PC-9 (cell line): ENCODE measurements at regions of chr3 and their contacts with region 1.

Region 1: GRCh38 chr3:189756220-189757078 is 125.3 kb downstream of the TP63 start:
- DNase-seq: peak; percentile 58 to 100
- H3K4me3 ChIP-seq: no peak overlapping the region; the same call in 1 of the 2 replicates
- H3K27ac ChIP-seq: peak overlapping the region; percentile 93
- H3K4me1 ChIP-seq: peaks cover 40% of the 10 kb centered on the region
- H3K27me3 ChIP-seq: no peaks in the 10 kb centered on the region
- CTCF ChIP-seq: no peak

Region 2: DNA sequence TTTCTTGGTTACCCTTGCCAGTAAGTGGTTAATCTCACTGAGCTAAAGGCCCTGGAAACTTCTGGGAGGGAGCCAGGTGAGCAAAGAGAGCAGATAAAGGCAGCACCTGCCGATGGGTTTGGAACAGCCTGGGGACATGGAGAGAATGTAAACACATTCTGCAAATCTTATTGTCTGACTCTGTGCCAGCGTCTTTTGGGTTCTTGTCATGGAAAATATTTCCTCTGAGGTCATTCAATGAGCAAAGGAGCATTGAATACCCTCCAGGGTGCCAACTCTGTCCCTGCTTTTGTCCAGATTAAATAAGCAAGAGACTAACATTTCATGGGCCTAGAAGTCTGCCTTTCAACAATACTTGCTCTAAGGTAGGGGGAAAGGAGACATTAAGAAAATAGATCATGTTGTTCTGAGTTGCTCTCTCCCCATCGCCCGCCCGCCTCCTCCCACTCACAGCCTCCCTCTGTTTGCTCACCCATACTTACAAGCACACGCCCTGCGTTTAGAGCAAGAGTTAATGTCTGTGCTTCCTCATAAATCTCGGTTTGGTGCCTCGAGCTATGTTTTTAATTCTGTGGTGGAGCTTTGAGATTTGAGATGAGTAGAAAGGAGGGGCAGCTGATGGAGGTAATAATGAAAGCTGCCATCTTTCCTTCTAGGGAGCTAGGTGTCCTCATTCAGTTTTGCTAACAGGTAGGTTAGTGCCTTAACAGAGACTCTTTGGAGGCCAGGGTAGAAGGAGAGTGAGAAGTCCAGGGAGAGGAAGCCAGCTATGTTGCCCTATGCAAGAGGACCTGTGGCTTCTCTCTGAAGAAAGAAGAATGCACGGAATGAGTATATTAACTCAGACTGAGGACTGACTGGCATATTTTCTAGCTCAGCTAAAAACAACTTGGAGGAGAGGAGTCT is 451.8 kb before region 1 on chr3:
- CTCF ChIA-PET with region 1: no interaction called
- POLR2A ChIA-PET with region 1: no interaction called
- intact Hi-C with region 1: loop called (anchors 1 kb)
- DNase-seq: peak; percentile 93 to 99
- H3K4me3 ChIP-seq: peak overlapping the region; percentile 27; the same call in 1 of the 2 replicates
- H3K27ac ChIP-seq: peak overlapping the region; percentile 85
- H3K4me1 ChIP-seq: peaks cover 44% of the 10 kb centered on the region
- H3K27me3 ChIP-seq: no peaks in the 10 kb centered on the region
- CTCF ChIP-seq: no peak

Region 3: DNA sequence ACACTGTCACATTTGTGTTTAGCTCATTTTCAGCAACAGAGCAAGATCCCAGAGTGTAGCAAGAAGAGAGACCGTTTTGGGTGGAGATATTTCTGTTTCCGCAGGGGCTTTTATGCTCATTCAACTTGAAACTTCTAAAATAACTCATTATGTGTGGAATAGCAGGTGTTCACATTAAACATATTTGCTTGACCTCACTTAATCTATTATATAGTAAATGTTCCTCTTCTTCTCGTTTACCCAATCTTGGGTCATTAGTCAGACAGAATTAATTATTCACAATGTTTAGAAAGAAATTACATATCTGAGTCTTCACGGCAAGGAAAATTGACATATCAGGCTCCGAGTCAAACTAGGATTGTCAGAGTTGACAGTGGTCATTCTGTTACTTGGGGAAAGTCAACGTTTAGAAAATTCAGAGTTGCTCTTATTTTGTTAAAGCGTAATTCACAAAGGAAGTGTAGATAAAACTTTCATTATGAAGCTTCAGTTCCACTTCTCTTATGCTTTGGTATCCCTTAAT is 361.8 kb before region 1 on chr3:
- CTCF ChIA-PET with region 1: no interaction called
- POLR2A ChIA-PET with region 1: no interaction called
- intact Hi-C with region 1: loop called (anchors 2 kb)
- DNase-seq: no peak
- H3K4me3 ChIP-seq: no peak overlapping the region
- H3K27ac ChIP-seq: peak overlapping the region; percentile 89
- H3K4me1 ChIP-seq: peaks cover 36% of the 10 kb centered on the region
- H3K27me3 ChIP-seq: no peaks in the 10 kb centered on the region
- CTCF ChIP-seq: no peak

Region 4: DNA sequence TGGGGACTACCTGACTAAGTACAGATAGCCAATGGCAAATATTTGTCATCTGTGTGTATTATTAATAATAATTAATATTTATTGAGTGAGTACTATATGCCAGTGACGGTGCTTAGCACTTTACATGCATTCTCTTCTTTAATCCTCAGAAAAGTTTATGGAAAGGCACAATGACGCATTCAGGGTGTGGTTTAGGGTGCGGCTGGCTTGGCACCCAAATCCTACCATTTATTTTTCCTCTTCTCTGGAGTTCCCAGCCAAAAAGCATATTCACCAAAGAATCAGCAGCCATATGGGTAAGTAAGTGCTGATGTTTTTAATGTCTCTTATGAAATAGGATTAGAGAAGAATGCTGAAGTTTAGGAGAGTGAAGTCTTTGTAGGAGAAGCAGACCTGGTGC is 265.7 kb before region 1 on chr3:
- CTCF ChIA-PET with region 1: no interaction called
- POLR2A ChIA-PET with region 1: no interaction called
- intact Hi-C with region 1: loop called (anchors 10 kb)
- DNase-seq: peak in 1 of 2 experiments; percentile 24
- H3K4me3 ChIP-seq: no peak overlapping the region
- H3K27ac ChIP-seq: peak overlapping the region; percentile 8; the same call in 1 of the 2 replicates
- H3K4me1 ChIP-seq: peaks cover 12% of the 10 kb centered on the region
- H3K27me3 ChIP-seq: no peaks in the 10 kb centered on the region
- CTCF ChIP-seq: no peak

Region 5: DNA sequence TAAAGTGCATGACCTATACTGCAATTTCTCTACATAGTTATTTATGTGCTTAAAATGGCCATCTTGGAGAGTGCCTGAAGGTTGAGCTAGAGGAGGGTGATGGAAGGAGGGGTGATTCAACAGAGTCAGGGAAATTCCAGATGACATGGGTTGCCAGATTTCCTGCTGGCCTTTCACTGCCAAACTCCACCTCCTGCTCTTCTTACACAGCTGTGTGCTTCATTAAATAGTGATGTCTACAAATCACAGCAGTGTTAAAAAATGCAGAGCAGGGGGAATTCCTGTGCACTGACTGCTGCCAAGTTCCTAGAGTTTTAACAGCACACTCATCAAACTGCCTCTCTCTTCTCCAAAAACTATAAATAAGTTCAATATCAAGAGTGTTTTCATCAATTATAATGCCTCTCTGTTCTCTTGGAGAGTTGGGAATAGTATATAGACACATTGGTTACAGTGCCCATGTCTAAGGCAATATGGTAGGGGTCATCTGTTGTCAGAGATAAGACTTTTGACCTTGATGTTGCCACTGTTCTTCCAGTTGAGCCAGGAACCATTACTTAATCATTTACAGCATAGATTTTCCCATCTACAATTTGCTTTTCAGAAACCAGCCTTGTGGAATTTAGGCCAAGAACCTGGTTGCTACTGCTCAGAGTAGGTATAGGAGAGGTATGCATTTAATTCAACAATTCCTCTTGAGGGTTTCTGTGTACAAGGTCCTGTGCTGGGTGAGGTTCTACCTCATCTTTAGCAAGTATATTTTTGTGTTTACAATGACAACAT is 45.6 kb before region 1 on chr3:
- CTCF ChIA-PET with region 1: no interaction called
- POLR2A ChIA-PET with region 1: no interaction called
- intact Hi-C with region 1: loop called (anchors 5 kb)
- DNase-seq: peak; percentile 65 to 68
- H3K4me3 ChIP-seq: no peak overlapping the region
- H3K27ac ChIP-seq: peak overlapping the region; percentile 16; the same call in 1 of the 2 replicates
- H3K4me1 ChIP-seq: peaks cover 24% of the 10 kb centered on the region
- H3K27me3 ChIP-seq: no peaks in the 10 kb centered on the region
- CTCF ChIP-seq: no peak

Region 6: DNA sequence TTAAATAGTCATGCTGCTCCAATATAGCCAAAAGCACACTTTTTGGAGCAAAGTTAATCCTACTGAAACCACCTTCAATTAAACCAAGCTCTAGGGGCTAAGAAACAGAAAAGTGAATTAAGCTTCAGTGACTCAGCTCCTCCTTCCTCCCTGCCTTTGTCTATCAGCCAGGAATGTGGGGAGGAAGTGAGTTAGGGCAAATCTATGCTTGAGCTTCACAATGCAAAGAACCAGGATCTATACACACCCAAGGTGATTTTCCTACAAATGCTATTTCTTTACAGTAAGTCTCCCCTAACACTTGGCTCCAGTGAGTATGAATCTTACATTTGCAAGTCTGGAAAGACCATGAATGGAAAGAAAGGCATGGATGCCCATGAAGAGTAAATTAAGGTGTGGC is 152.2 kb after region 1 on chr3:
- CTCF ChIA-PET with region 1: no interaction called
- POLR2A ChIA-PET with region 1: interaction called, 3 read pairs
- intact Hi-C with region 1: loop called (anchors 1 kb)
- DNase-seq: peak; percentile 47 to 77
- H3K4me3 ChIP-seq: peak overlapping the region; percentile 7; the same call in 1 of the 2 replicates
- H3K27ac ChIP-seq: peak overlapping the region; percentile 98
- H3K4me1 ChIP-seq: peaks cover 45% of the 10 kb centered on the region
- H3K27me3 ChIP-seq: no peaks in the 10 kb centered on the region
- CTCF ChIP-seq: no peak

Region 7: GRCh38 chr3:190192739-190193138 is 436.3 kb after region 1 on chr3:
- CTCF ChIA-PET with region 1: no interaction called
- POLR2A ChIA-PET with region 1: no interaction called
- intact Hi-C with region 1: no loop called
- DNase-seq: no peak
- H3K4me3 ChIP-seq: no peak overlapping the region
- H3K27ac ChIP-seq: no peak overlapping the region
- H3K4me1 ChIP-seq: no peaks in the 10 kb centered on the region
- H3K27me3 ChIP-seq: no peaks in the 10 kb centered on the region
- CTCF ChIP-seq: no peak

Region 8: GRCh38 chr3:191051037-191051436 is 1294.6 kb after region 1 on chr3:
- CTCF ChIA-PET with region 1: no interaction called
- POLR2A ChIA-PET with region 1: no interaction called
- intact Hi-C with region 1: no loop called
- DNase-seq: peak in 1 of 2 experiments; percentile 58
- H3K4me3 ChIP-seq: no peak overlapping the region
- H3K27ac ChIP-seq: no peak overlapping the region
- H3K4me1 ChIP-seq: no peaks in the 10 kb centered on the region
- H3K27me3 ChIP-seq: no peaks in the 10 kb centered on the region
- CTCF ChIP-seq: peak; percentile 87